ENCODE measurements at regions of chr5 and their contacts with region 1.

Region 1: DNA sequence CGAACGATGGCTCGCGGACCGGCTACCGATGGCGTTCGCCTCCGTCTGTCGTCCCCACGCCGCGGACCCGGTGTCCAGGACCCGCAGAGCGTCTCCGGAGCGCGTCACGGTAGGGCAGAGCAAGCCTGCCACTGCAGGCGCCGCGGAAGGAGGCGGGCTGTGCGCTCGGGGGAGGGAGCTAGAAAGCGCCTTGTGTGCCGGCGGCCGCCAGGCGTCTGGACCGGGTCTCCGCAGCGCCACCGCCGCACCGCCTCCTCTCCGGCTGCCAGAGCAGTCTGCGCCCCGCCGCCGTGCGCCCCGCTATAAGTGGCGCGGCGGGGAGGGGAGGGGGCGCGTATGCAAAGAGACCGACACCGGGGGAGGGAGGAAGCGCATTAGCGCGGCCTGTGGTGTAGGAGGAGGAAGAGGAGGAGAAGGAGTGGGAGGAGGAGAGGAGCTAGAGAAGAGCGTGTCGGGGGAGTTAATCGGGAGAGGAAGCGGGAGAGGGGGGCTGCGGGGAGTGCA is at the start of gene ENC1:
- DNase-seq: peak; percentile 87 to 89
- ATAC-seq: peak; percentile 85 to 95 (median 89)
- H3K4me3 ChIP-seq: peak within 1 kb of the TSS; percentile 36 to 89 (median 81)
- H3K27ac ChIP-seq: peak within 1 kb of the TSS; percentile 61 to 97 (median 92)
- H3K4me1 ChIP-seq: peaks cover 5 to 67% (median 43%) of the 10 kb centered on the region in 9 donors
- H3K27me3 ChIP-seq: no peaks in the 10 kb centered on the region
- CTCF ChIP-seq: peak; percentile 44 to 70 (median 60)
- total RNA-seq, gene ENC1: 2.8 to 9.1 (median 4.0) TPM

Region 2: GRCh38 chr5:73591102-73591695 is 1049.3 kb before region 1 on chr5:
- intact Hi-C with region 1: loop called in 3 of 10 experiments (anchors 5 to 10 kb)
- DNase-seq: peak in 1 of 2 donors; percentile 68
- ATAC-seq: peak in 6 of 8 donors; percentile 65 to 81 (median 73)
- H3K4me3 ChIP-seq: no peak overlapping the region
- H3K27ac ChIP-seq: no peak overlapping the region
- H3K4me1 ChIP-seq: no peaks in the 10 kb centered on the region
- H3K27me3 ChIP-seq: no peaks in the 10 kb centered on the region
- CTCF ChIP-seq: peak; percentile 74 to 91 (median 86)

Region 3: GRCh38 chr5:74044936-74045335 is 595.6 kb before region 1 on chr5:
- intact Hi-C with region 1: loop called in 1 of 10 experiments (anchors 5 kb)
- DNase-seq: no peak
- ATAC-seq: no peak
- H3K4me3 ChIP-seq: no peak overlapping the region
- H3K27ac ChIP-seq: no peak overlapping the region
- H3K4me1 ChIP-seq: no peaks in the 10 kb centered on the region
- H3K27me3 ChIP-seq: no peaks in the 10 kb centered on the region
- CTCF ChIP-seq: no peak

Region 4: DNA sequence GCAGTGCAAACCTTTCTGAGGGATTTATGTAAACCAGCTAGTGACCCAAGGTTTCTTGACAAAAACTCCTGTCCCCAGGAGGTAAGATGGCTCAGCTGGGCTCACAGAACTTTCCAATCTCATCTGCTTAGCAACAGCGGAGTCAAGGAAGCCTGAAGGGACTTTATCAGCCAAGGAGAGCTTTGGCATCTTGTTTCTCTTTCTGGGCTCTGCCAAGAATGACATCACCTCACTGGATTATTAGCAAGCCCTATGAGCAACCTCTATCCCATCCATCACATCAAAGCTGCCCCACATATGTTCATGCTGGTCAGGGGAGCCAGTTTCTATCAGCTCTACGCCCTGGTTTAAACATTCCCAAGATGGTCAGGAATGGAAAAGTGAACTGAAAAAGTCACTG is 461.3 kb before region 1 on chr5:
- intact Hi-C with region 1: loop called in 1 of 10 experiments (anchors 10 kb)
- DNase-seq: no peak
- ATAC-seq: peak in 3 of 8 donors; percentile 38 to 80 (median 72)
- H3K4me3 ChIP-seq: no peak overlapping the region
- H3K27ac ChIP-seq: no peak overlapping the region
- H3K4me1 ChIP-seq: peaks cover 0 to under 1% (median 0%) of the 10 kb centered on the region in 9 donors
- H3K27me3 ChIP-seq: no peaks in the 10 kb centered on the region
- CTCF ChIP-seq: no peak

Region 5: GRCh38 chr5:74394916-74395781 is 245.4 kb before region 1 on chr5:
- intact Hi-C with region 1: loop called in 1 of 10 experiments (anchors 10 kb)
- DNase-seq: no peak
- ATAC-seq: peak in 6 of 8 donors; percentile 46 to 82 (median 52)
- H3K4me3 ChIP-seq: no peak overlapping the region
- H3K27ac ChIP-seq: no peak overlapping the region
- H3K4me1 ChIP-seq: peaks cover 0 to 15% (median 0%) of the 10 kb centered on the region in 9 donors
- H3K27me3 ChIP-seq: no peaks in the 10 kb centered on the region
- CTCF ChIP-seq: peak in 1 of 9 donors; percentile 9

Region 6: DNA sequence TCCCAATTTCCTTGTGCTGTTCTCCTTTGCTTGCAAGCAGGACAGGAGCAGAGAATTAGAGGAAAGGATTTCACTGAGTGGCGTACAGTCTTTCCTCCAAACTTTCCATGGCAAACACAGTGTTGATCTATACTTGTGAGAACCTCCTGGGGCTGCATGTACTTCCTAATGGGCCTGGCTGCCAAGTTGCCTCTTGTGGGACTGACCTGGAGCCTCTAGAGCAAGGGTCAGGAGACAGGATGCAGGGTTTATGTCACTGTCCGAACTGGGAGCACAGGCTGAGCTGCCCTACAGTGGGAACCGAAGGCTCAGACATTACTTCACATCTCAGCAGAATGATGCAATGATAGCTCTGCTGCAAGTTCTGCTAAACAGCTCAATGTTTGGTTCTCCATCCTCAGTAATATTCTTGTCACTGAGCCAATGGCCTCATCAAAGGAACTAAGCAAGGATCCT is 102.3 kb before region 1 on chr5:
- intact Hi-C with region 1: loop called in 3 of 10 experiments (anchors 2 to 10 kb)
- DNase-seq: peak; percentile 61 to 80
- ATAC-seq: peak; percentile 92 to 98 (median 97)
- H3K4me3 ChIP-seq: no peak overlapping the region
- H3K27ac ChIP-seq: peak overlapping the region in 8 of 10 donors; percentile 2 to 81 (median 41)
- H3K4me1 ChIP-seq: peaks cover 3 to 46% (median 25%) of the 10 kb centered on the region in 9 donors
- H3K27me3 ChIP-seq: no peaks in the 10 kb centered on the region
- CTCF ChIP-seq: no peak

Measured in heart right ventricle (tissue), 16 donors.